ENCODE measurements at regions of chr5 and their contacts with region 1.

Region 1: GRCh38 chr5:52809884-52810283 is 22.2 kb downstream of the ITGA1 start:
- DNase-seq: no peak
- H3K4me3 ChIP-seq: no peak overlapping the region
- H3K27ac ChIP-seq: peak overlapping the region; percentile 72 to 78
- H3K4me1 ChIP-seq: peaks cover 9 to 64% of the 10 kb centered on the region in 2 donors
- H3K27me3 ChIP-seq: no peaks in the 10 kb centered on the region
- CTCF ChIP-seq: no peak

Region 2: DNA sequence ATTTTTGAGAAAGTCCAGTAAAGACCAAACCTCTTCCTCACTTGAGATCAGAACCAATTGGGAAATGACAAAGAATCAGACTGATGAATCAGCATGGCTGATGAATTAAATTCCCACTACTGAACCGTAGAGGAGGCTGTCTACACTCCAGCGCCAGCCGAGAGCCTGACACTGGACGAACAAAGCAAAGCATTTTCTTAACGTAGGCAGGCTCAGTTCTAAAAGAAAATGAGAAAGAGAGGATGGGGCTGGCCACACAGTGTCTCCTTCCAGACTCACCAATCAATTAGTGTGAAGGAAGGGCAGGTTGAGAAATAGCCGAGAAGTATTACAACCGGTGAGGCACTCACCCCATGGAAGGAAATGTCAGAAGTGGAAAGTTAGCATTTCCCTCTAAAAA is 27.2 kb after region 1 on chr5:
- intact Hi-C with region 1: loop called (anchors 2 kb)
- DNase-seq: peak in 1 of 2 donors; percentile 77
- H3K4me3 ChIP-seq: peak overlapping the region; percentile 16 to 32
- H3K27ac ChIP-seq: peak overlapping the region; percentile 80 to 83
- H3K4me1 ChIP-seq: peaks cover 0 to 16% of the 10 kb centered on the region in 2 donors
- H3K27me3 ChIP-seq: no peaks in the 10 kb centered on the region
- CTCF ChIP-seq: peak; percentile 22 to 49 (median 35)

Measured in ascending aorta (tissue), 2 donors.